CD4-positive, alpha-beta T cell (primary cell): ENCODE measurements at regions of chrX and their contacts with region 1.

Region 1: DNA sequence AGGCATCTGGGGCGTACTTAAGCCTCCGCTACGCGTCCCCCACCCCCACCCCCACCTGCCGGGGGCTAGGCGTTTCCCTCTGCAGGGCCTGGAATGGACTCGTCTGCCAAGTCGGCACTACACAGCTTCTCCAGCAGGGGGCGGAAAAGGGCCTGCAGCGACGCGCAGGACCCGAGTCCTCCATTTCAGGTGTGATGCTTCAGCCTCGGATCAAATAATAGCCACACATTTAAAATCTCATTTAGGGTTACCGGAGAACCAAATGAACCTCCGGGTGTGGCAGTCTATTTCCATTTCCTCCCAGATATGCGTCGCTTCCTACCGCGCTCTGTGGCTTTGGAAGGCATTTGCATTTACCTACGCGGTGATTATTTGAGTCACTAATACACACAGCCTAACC is 2.9 kb downstream of the PAK3 start:
- DNase-seq: peak; percentile 47 to 82 (median 56)
- ATAC-seq: peak; percentile 72
- H3K4me3 ChIP-seq: peak overlapping the region; percentile 10
- H3K4me3 Mint-ChIP-seq: peak overlapping the region; percentile 62
- H3K27ac ChIP-seq: no peak overlapping the region
- H3K27ac Mint-ChIP-seq: peak overlapping the region; percentile 76
- H3K4me1 ChIP-seq: peaks cover 15% of the 10 kb centered on the region
- H3K4me1 Mint-ChIP-seq: peaks cover 30% of the 10 kb centered on the region
- H3K27me3 ChIP-seq: no peaks in the 10 kb centered on the region
- H3K27me3 Mint-ChIP-seq: peaks cover 14% of the 10 kb centered on the region
- CTCF ChIP-seq: peak; percentile 54

Region 2: DNA sequence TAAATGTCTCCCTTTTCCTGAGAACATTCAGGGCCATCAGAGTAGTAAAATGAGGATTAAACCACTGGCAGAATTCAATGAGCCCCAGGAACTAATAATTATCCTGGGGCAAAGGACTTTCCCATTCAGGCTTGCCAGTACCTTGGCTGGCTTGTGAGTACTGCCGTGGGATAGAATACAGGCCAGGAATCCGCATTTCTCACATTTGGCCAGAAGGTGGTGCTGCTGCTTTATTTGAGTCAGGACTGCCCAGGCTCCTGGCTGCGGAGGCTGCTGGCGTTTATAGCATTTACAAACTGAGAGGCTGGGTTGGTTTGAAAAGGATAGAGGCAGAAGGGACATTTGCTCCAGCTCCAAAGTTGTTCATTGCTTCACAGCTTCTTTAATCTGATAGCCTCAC is 648.8 kb before region 1 on chrX:
- CTCF ChIA-PET with region 1: no interaction called
- POLR2A ChIA-PET with region 1: no interaction called
- intact Hi-C with region 1: loop called in 1 of 2 experiments (anchors 5 kb)
- DNase-seq: peak; percentile 10 to 64 (median 37)
- ATAC-seq: peak; percentile 48
- H3K4me3 ChIP-seq: no peak overlapping the region
- H3K4me3 Mint-ChIP-seq: no peak overlapping the region
- H3K27ac ChIP-seq: no peak overlapping the region
- H3K27ac Mint-ChIP-seq: no peak overlapping the region
- H3K4me1 ChIP-seq: no peaks in the 10 kb centered on the region
- H3K4me1 Mint-ChIP-seq: no peaks in the 10 kb centered on the region
- H3K27me3 ChIP-seq: no peaks in the 10 kb centered on the region
- H3K27me3 Mint-ChIP-seq: peaks cover 9% of the 10 kb centered on the region
- CTCF ChIP-seq: peak; percentile 53

Region 3: GRCh38 chrX:110992611-110993010 is 106.3 kb before region 1 on chrX:
- CTCF ChIA-PET with region 1: interaction called, 4 read pairs
- POLR2A ChIA-PET with region 1: no interaction called
- intact Hi-C with region 1: loop called (anchors 1 to 5 kb)
- DNase-seq: peak in 10 of 14 experiments; percentile 0 to 56 (median 6)
- ATAC-seq: no peak
- H3K4me3 ChIP-seq: no peak overlapping the region
- H3K4me3 Mint-ChIP-seq: no peak overlapping the region
- H3K27ac ChIP-seq: no peak overlapping the region
- H3K27ac Mint-ChIP-seq: no peak overlapping the region
- H3K4me1 ChIP-seq: no peaks in the 10 kb centered on the region
- H3K4me1 Mint-ChIP-seq: no peaks in the 10 kb centered on the region
- H3K27me3 ChIP-seq: peaks cover 0 to 5% of the 10 kb centered on the region in 2 experiments
- H3K27me3 Mint-ChIP-seq: peaks cover 18% of the 10 kb centered on the region
- CTCF ChIP-seq: peak; percentile 21

Region 4: GRCh38 chrX:111041018-111041462 is 57.8 kb before region 1 on chrX:
- CTCF ChIA-PET with region 1: no interaction called
- POLR2A ChIA-PET with region 1: no interaction called
- intact Hi-C with region 1: loop called in 1 of 2 experiments (anchors 2 kb)
- DNase-seq: peak in 8 of 14 experiments; percentile 1 to 73 (median 24)
- ATAC-seq: peak; percentile 85
- H3K4me3 ChIP-seq: no peak overlapping the region
- H3K4me3 Mint-ChIP-seq: peak overlapping the region; percentile 7
- H3K27ac ChIP-seq: peak overlapping the region in 1 of 2 donors; percentile 44
- H3K27ac Mint-ChIP-seq: peak overlapping the region; percentile 75
- H3K4me1 ChIP-seq: peaks cover 15% of the 10 kb centered on the region
- H3K4me1 Mint-ChIP-seq: peaks cover 11% of the 10 kb centered on the region
- H3K27me3 ChIP-seq: no peaks in the 10 kb centered on the region
- H3K27me3 Mint-ChIP-seq: no peaks in the 10 kb centered on the region
- CTCF ChIP-seq: no peak

Region 5: DNA sequence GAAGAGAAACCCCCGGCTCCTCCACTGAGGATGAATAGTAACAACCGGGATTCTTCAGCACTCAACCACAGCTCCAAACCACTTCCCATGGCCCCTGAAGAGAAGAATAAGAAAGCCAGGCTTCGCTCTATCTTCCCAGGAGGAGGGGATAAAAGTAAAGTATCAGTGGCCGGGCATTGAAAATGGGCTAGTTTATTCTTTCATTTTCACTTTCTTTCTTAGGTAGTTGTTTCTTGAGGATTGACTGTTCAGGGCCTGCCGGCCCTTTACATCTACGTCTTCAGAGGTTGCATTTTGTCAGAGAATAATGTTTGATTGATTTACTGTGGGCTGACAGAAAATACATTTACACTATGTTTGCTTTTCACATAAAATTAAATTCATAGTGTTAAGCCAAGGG is 24.3 kb after region 1 on chrX:
- CTCF ChIA-PET with region 1: no interaction called
- POLR2A ChIA-PET with region 1: no interaction called
- intact Hi-C with region 1: no loop called
- DNase-seq: peak in 4 of 14 experiments; percentile 3 to 39 (median 12)
- ATAC-seq: no peak
- H3K4me3 ChIP-seq: peak overlapping the region; percentile 54
- H3K4me3 Mint-ChIP-seq: peak overlapping the region; percentile 77
- H3K27ac ChIP-seq: peak overlapping the region in 1 of 2 donors; percentile 44
- H3K27ac Mint-ChIP-seq: peak overlapping the region; percentile 46
- H3K4me1 ChIP-seq: no peaks in the 10 kb centered on the region
- H3K4me1 Mint-ChIP-seq: peaks cover 6% of the 10 kb centered on the region
- H3K27me3 ChIP-seq: no peaks in the 10 kb centered on the region
- H3K27me3 Mint-ChIP-seq: no peaks in the 10 kb centered on the region
- CTCF ChIP-seq: no peak

Region 6: GRCh38 chrX:111216293-111216801 is 117.5 kb after region 1 on chrX:
- CTCF ChIA-PET with region 1: no interaction called
- POLR2A ChIA-PET with region 1: no interaction called
- intact Hi-C with region 1: no loop called
- DNase-seq: no peak
- ATAC-seq: no peak
- H3K4me3 ChIP-seq: no peak overlapping the region
- H3K4me3 Mint-ChIP-seq: no peak overlapping the region
- H3K27ac ChIP-seq: no peak overlapping the region
- H3K27ac Mint-ChIP-seq: no peak overlapping the region
- H3K4me1 ChIP-seq: no peaks in the 10 kb centered on the region
- H3K4me1 Mint-ChIP-seq: no peaks in the 10 kb centered on the region
- H3K27me3 ChIP-seq: no peaks in the 10 kb centered on the region
- H3K27me3 Mint-ChIP-seq: no peaks in the 10 kb centered on the region
- CTCF ChIP-seq: no peak